Panc1 (cell line): ENCODE measurements at regions of chr2 and their contacts with region 1.

Region 1: DNA sequence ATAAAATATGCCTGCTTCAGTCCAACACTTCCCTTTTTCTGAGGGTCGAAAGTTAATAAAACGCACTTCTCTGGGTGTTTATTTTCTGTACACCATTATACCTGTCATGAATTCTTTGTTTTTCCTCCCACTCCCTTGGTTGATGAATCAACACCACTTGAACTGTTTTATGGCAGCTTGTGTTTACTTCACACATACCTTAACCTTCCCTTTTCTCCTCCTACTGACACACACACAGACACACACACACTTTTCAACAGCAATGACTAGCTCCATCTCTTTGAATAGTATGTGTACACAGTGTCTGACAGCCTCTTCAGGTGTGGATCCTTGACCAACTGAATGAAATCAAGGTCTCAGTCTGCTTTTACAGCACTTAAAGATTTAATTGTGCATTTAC is 91.3 kb downstream of the SATB2 start:
- DNase-seq: no peak
- ATAC-seq: peak; percentile 66
- H3K4me3 ChIP-seq: no peak overlapping the region
- H3K27ac ChIP-seq: no peak overlapping the region
- H3K4me1 ChIP-seq: no peaks in the 10 kb centered on the region
- H3K27me3 ChIP-seq: no peaks in the 10 kb centered on the region
- CTCF ChIP-seq: no peak

Region 2: GRCh38 chr2:199444749-199445148 is 78.3 kb after region 1 on chr2:
- CTCF ChIA-PET with region 1: no interaction called
- POLR2A ChIA-PET with region 1: interaction called, 12 read pairs
- in situ Hi-C with region 1: no loop called
- intact Hi-C with region 1: no loop called
- DNase-seq: no peak
- ATAC-seq: no peak
- H3K4me3 ChIP-seq: no peak overlapping the region
- H3K27ac ChIP-seq: peak overlapping the region; percentile 74
- H3K4me1 ChIP-seq: peaks cover 63% of the 10 kb centered on the region
- H3K27me3 ChIP-seq: no peaks in the 10 kb centered on the region
- CTCF ChIP-seq: no peak

Region 3: GRCh38 chr2:199488772-199489400 is 122.5 kb after region 1 on chr2:
- CTCF ChIA-PET with region 1: no interaction called
- POLR2A ChIA-PET with region 1: no interaction called
- in situ Hi-C with region 1: no loop called
- intact Hi-C with region 1: no loop called
- DNase-seq: no peak
- ATAC-seq: no peak
- H3K4me3 ChIP-seq: no peak overlapping the region
- H3K27ac ChIP-seq: no peak overlapping the region
- H3K4me1 ChIP-seq: no peaks in the 10 kb centered on the region
- H3K27me3 ChIP-seq: no peaks in the 10 kb centered on the region
- CTCF ChIP-seq: peak; percentile 86